Posterior vena cava (tissue), 2 donors: ENCODE measurements at regions of chr17 and their contacts with region 1.

Region 1: DNA sequence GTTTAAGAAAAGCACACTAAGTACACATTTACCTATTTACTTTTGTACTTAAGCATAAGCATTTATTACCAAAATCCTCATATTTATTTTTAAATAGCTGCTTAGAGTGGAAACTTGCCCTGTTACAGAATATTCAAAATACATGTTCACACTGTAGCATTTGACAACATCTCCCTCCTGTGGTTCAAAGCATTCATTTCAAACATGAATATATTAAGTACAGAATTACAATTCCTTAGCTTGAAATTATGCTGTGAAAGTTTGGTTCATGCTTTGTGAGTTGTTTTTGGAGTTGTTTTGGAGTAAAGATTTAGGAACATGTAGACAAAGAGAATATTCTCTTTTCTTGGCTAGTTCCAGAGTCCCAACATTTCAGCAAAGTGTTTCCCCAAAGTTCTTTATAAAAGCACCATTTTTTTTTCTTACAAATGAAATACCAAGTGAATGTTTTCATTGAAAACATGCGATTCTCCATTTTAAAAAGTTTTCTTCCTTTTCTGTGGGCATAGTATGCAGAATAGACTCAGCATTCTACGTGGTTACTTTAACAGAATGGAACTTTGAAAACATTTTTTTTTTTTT is 33.2 kb downstream of the TUBD1 start:
- DNase-seq: no peak

Region 2: GRCh38 chr17:59619293-59620063 is 240.1 kb before region 1 on chr17 and contains the start of gene CLTC:
- intact Hi-C with region 1: loop called in 1 of 2 experiments (anchors 10 kb)
- DNase-seq: peak; percentile 98
- total RNA-seq, gene CLTC: 250 to 254 TPM

Region 3: DNA sequence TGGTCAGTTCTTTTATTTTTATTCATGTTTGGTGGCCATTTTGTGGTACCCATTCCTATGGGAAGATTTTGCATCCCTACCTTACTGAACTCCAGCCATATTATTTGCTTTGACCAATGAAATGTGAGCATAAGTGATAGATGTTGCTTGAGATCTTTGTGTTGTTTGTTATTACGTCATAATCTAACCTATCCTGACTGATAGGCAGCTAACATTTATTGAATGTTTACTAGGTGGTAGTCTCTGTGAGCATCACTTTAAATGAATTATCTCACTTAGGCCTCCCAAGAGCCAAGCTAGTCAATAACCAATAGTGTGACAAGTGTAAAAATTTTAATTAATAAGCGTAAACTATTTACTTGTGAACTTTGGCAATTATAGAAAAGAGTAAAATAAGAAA is 114.5 kb before region 1 on chr17:
- intact Hi-C with region 1: loop called in 1 of 2 experiments (anchors 2 kb)
- DNase-seq: no peak

Region 4: GRCh38 chr17:59753522-59754467 is 105.7 kb before region 1 on chr17:
- intact Hi-C with region 1: loop called in 1 of 2 experiments (anchors 2 kb)
- DNase-seq: no peak